Left ventricle myocardium inferior (tissue), 1 donor: ENCODE measurements at regions of chr5 and their contacts with region 1.

Region 1: GRCh38 chr5:82351754-82352145 is 73.6 kb upstream of the RPS23 start:
- DNase-seq: no peak
- H3K4me3 ChIP-seq: no peak overlapping the region
- H3K27ac ChIP-seq: peak overlapping the region; percentile 74
- H3K4me1 ChIP-seq: peaks cover 53% of the 10 kb centered on the region
- H3K27me3 ChIP-seq: no peaks in the 10 kb centered on the region
- CTCF ChIP-seq: peak; percentile 86

Region 2: GRCh38 chr5:82312373-82312856 is 39.3 kb before region 1 on chr5:
- intact Hi-C with region 1: loop called (anchors 2 kb)
- DNase-seq: peak; percentile 59
- H3K4me3 ChIP-seq: peak overlapping the region; percentile 31
- H3K27ac ChIP-seq: peak overlapping the region; percentile 41
- H3K4me1 ChIP-seq: peaks cover 19% of the 10 kb centered on the region
- H3K27me3 ChIP-seq: no peaks in the 10 kb centered on the region
- CTCF ChIP-seq: peak; percentile 87

Region 3: DNA sequence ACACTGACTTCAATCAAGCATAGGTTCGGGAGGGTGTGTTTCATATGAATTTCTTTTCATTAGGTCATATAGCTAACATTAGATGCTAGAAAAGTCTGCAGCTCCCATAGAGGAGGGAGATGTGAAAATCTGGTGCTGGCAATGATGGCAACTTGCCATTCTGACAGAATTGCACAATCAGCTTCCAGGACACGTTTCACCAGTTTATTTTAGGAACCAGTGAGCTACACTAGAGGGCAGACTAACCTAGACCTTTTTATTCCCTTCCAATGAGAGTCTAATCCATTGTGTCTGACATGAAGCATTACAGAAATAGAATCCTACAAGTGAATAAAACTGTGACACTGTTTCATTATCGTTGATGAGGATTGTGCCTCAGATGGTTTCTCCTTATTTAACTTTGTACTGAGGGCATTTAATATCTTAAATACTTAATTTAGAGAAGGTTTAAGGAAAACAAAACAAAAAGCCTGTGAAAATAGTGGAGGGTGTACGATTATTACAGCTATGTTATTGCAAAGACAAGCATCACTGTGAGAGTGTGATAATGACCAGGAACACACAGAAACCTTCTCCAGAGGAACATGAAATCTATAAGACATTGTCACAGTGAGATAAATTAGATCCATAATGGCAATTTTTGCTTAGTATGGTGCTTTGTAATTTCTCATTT is 289.7 kb after region 1 on chr5:
- intact Hi-C with region 1: loop called (anchors 5 kb)
- DNase-seq: peak; percentile 30
- H3K4me3 ChIP-seq: no peak overlapping the region
- H3K27ac ChIP-seq: peak overlapping the region; percentile 37
- H3K4me1 ChIP-seq: peaks cover 16% of the 10 kb centered on the region
- H3K27me3 ChIP-seq: no peaks in the 10 kb centered on the region
- CTCF ChIP-seq: peak; percentile 79

Region 4: GRCh38 chr5:82881571-82882174 is 529.9 kb after region 1 on chr5:
- intact Hi-C with region 1: no loop called
- DNase-seq: no peak
- H3K4me3 ChIP-seq: no peak overlapping the region
- H3K27ac ChIP-seq: no peak overlapping the region
- H3K4me1 ChIP-seq: peaks cover 6% of the 10 kb centered on the region
- H3K27me3 ChIP-seq: no peaks in the 10 kb centered on the region
- CTCF ChIP-seq: no peak

Region 5: GRCh38 chr5:83564069-83564749 is 1212.5 kb after region 1 on chr5:
- intact Hi-C with region 1: loop called (anchors 10 kb)
- DNase-seq: no peak
- H3K4me3 ChIP-seq: no peak overlapping the region
- H3K27ac ChIP-seq: peak overlapping the region; percentile 71
- H3K4me1 ChIP-seq: peaks cover 10% of the 10 kb centered on the region
- H3K27me3 ChIP-seq: no peaks in the 10 kb centered on the region
- CTCF ChIP-seq: peak; percentile 73